ENCODE measurements at regions of chr4 and their contacts with region 1.

Region 1: GRCh38 chr4:10018818-10019461 is 2.4 kb downstream of the SLC2A9 start:
- DNase-seq: peak; percentile 89 to 96
- ATAC-seq: peak; percentile 82 to 91
- H3K4me3 ChIP-seq: peak overlapping the region; percentile 45 to 51 (median 48)
- H3K27ac ChIP-seq: peak overlapping the region; percentile 82 to 91 (median 88)
- H3K4me1 ChIP-seq: peaks cover 16 to 34% of the 10 kb centered on the region in 2 donors
- H3K27me3 ChIP-seq: no peaks in the 10 kb centered on the region
- CTCF ChIP-seq: peak; percentile 98 to 100 (median 99)
- POLR2A ChIP-seq: peak; percentile 38 to 44

Region 2: DNA sequence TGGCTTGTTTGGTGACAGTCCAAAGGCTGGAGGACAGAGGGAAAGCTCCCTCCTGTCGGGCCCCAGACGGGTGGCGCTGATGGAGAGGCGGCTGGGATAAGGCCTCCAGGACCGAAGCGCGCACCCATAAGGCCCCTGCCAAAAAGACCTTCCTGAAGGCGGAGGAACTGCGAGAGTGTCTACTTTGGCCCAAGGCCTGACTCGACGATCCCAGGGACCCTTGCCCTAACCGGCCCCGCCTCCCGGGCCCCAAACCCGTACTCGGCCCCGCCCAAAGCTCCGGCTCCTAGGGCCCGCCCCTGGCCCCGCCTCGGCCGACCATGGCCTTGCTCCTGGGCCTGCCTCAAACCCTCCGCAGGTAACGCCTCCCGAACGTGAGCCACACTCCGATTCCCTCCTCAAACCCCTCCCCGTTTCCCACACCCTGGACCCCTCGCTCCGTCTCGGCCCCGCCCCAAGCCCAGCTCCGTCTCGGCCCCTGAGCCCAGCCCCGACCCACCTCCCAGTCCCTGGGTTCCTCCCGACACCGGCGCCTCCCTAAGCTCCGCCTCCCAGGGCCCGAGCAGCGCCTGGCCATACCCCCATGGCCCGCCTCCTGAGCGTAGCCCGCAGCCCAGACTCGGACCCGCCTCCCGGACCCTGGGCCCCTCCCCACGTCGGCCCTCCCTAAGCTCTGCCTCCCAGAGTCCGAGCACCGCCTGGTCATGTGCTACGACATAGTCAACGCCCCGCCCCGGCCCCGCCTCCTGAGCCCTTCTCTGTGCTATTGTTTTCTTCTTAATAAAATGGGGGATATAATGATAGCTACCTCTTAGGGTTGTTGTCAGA is 327.5 kb before region 1 on chr4:
- in situ Hi-C with region 1: no loop called
- intact Hi-C with region 1: loop called (anchors 5 kb)
- DNase-seq: peak; percentile 91 to 93
- ATAC-seq: peak; percentile 98 to 99
- H3K4me3 ChIP-seq: peak overlapping the region; percentile 60 to 81 (median 68)
- H3K27ac ChIP-seq: peak overlapping the region; percentile 73 to 85 (median 77)
- H3K4me1 ChIP-seq: peaks cover 0 to 3% of the 10 kb centered on the region in 2 donors
- H3K27me3 ChIP-seq: no peaks in the 10 kb centered on the region
- CTCF ChIP-seq: no peak
- POLR2A ChIP-seq: no peak

Region 3: GRCh38 chr4:10033191-10033881 is 14.4 kb after region 1 on chr4:
- in situ Hi-C with region 1: no loop called
- intact Hi-C with region 1: loop called (anchors 2 kb)
- DNase-seq: no peak
- ATAC-seq: no peak
- H3K4me3 ChIP-seq: no peak overlapping the region
- H3K27ac ChIP-seq: peak overlapping the region; percentile 21 to 54 (median 48)
- H3K4me1 ChIP-seq: peaks cover 50 to 61% of the 10 kb centered on the region in 2 donors
- H3K27me3 ChIP-seq: no peaks in the 10 kb centered on the region
- CTCF ChIP-seq: no peak
- POLR2A ChIP-seq: no peak

Region 4: GRCh38 chr4:10116580-10117358 is 97.8 kb after region 1 on chr4 and contains the start of gene WDR1:
- in situ Hi-C with region 1: no loop called
- intact Hi-C with region 1: loop called (anchors 10 kb)
- DNase-seq: peak; percentile 93 to 97
- ATAC-seq: peak; percentile 87 to 91
- H3K4me3 ChIP-seq: peak within 1 kb of the TSS; percentile 65 to 82 (median 75)
- H3K27ac ChIP-seq: peak within 1 kb of the TSS; percentile 93 to 99 (median 97)
- H3K4me1 ChIP-seq: peaks cover 46 to 48% of the 10 kb centered on the region in 2 donors
- H3K27me3 ChIP-seq: no peaks in the 10 kb centered on the region
- CTCF ChIP-seq: no peak
- POLR2A ChIP-seq: peak; percentile 98
- total RNA-seq, gene WDR1: 57.3 to 84.2 (median 72.7) TPM

Region 5: DNA sequence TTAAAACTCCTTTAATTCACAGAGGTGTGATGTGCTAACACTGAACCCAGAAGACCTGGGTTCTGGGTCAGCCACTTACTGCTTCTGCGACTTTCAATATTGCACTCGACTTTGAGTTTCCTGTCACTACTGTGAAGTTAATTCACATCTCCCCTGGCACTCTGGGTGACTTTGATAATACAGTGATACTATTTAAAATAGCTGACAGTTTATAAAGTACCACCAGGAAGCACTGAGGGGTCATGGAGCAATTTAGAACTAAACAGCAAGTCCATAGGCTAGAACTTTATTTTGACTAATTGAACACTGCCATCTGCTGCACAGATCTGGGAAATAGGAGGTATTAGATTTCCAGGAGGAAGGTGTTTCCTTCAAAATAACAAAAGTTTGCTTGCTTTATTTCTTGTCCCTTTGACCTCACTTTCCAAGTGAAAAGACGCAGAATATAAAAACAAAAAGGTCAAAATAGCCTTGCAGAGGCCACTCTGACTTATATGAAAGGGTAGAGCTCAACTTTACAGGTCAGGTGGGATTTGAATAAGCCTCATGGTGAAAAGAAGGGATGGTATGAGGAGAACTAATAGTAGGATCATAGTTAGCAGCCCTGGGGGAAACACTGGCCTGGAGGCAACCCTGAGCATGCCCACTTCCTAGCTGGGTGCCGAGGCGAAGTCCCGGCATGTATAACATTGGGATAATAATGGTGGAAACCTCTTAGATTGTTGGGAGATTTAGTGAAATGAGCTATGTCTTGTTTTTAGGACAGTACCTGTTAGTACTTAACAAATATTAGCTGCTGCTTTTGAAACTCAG is 384.9 kb after region 1 on chr4:
- in situ Hi-C with region 1: loop called in 1 of 4 experiments (anchors 25 kb)
- intact Hi-C with region 1: no loop called
- DNase-seq: no peak
- ATAC-seq: peak; percentile 33 to 56
- H3K4me3 ChIP-seq: no peak overlapping the region
- H3K27ac ChIP-seq: no peak overlapping the region
- H3K4me1 ChIP-seq: no peaks in the 10 kb centered on the region
- H3K27me3 ChIP-seq: no peaks in the 10 kb centered on the region
- CTCF ChIP-seq: peak; percentile 36 to 53 (median 48)
- POLR2A ChIP-seq: no peak